ENCODE measurements at regions of chr1 and their contacts with region 1.

Region 1: GRCh38 chr1:206663832-206664652 is 20.7 kb upstream of the MAPKAPK2 start:
- DNase-seq: no peak
- ATAC-seq: peak; percentile 94
- H3K4me3 ChIP-seq: peak overlapping the region; percentile 44; the same call in 1 of the 2 replicates
- H3K27ac ChIP-seq: no peak overlapping the region
- H3K4me1 ChIP-seq: peaks cover 10% of the 10 kb centered on the region
- H3K27me3 ChIP-seq: no peaks in the 10 kb centered on the region
- CTCF ChIP-seq: peak; percentile 81 to 85 (median 84)
- EP300 ChIP-seq: no peak
- POLR2A ChIP-seq: no peak
- RAD21 ChIP-seq: peak; percentile 89

Region 2: GRCh38 chr1:206479183-206480125 is 184.6 kb before region 1 on chr1:
- CTCF ChIA-PET with region 1: interaction called, 31 read pairs
- POLR2A ChIA-PET with region 1: no interaction called
- RAD21 ChIA-PET with region 1: interaction called, 6 read pairs
- SMC1A ChIA-PET with region 1: interaction called, 13 read pairs
- in situ Hi-C with region 1: no loop called
- intact Hi-C with region 1: no loop called
- DNase-seq: no peak
- ATAC-seq: peak; percentile 77
- H3K4me3 ChIP-seq: no peak overlapping the region
- H3K27ac ChIP-seq: no peak overlapping the region
- H3K4me1 ChIP-seq: peaks cover 17% of the 10 kb centered on the region
- H3K27me3 ChIP-seq: no peaks in the 10 kb centered on the region
- CTCF ChIP-seq: peak; percentile 77 to 87 (median 84)
- EP300 ChIP-seq: no peak
- POLR2A ChIP-seq: no peak
- RAD21 ChIP-seq: peak; percentile 80

Region 3: GRCh38 chr1:206556750-206557635 is 107.0 kb before region 1 on chr1:
- CTCF ChIA-PET with region 1: interaction called, 12 read pairs
- POLR2A ChIA-PET with region 1: interaction called, 4 read pairs
- RAD21 ChIA-PET with region 1: interaction called, 5 read pairs
- SMC1A ChIA-PET with region 1: interaction called, 5 read pairs
- in situ Hi-C with region 1: no loop called
- intact Hi-C with region 1: no loop called
- DNase-seq: no peak
- ATAC-seq: peak; percentile 76
- H3K4me3 ChIP-seq: peak overlapping the region; percentile 95
- H3K27ac ChIP-seq: peak overlapping the region; percentile 98
- H3K4me1 ChIP-seq: peaks cover 42% of the 10 kb centered on the region
- H3K27me3 ChIP-seq: no peaks in the 10 kb centered on the region
- CTCF ChIP-seq: no peak
- EP300 ChIP-seq: peak in 1 of 2 experiments; percentile 51; a peak in 2 of 4 replicates
- POLR2A ChIP-seq: peak; percentile 90
- RAD21 ChIP-seq: no peak

Region 4: DNA sequence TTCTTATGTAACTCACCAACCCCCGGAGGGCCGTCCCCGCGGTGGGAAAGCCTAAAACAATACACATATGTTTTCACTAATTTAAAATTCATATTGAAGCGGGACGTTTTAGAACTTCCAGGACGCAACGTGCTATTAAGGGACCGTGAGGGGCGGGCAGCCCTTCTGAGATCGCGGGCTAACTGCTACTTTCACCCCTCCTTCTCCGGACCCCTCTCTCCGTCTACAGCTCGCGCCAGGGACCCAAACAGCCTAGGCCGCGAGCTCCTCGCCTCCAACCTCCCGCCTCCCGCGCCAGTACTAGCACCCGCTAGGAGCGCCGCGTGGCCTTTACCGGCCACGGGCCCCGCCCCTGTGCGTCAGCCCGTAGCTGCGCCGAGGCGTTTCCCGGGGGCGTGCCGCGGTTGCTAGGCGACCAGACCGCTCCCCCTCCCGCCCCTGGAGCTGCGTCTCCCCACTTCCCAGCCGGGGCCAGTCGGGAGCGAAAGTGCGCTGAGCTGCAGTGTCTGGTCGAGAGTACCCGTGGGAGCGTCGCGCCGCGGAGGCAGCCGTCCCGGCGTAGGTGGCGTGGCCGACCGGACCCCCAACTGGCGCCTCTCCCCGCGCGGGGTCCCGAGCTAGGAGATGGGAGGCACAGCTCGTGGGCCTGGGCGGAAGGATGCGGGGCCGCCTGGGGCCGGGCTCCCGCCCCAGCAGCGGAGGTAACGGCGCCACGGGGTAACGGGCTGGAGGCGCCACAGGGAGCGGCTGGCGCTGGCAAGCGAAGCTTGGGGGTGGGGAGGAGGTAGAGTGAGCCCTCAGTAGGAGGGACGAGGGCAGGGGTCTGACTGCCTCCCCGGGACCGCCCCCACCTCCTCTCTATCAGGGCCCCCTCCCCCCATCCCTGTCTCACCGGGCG is 28.7 kb before region 1 on chr1 and contains the start of gene DYRK3:
- CTCF ChIA-PET with region 1: interaction called, 1,150 read pairs
- POLR2A ChIA-PET with region 1: interaction called, 92 read pairs
- RAD21 ChIA-PET with region 1: interaction called, 207 read pairs
- SMC1A ChIA-PET with region 1: interaction called, 301 read pairs
- in situ Hi-C with region 1: no loop called
- intact Hi-C with region 1: loop called (anchors 1 kb)
- DNase-seq: peak; percentile 71
- ATAC-seq: peak; percentile 92
- H3K4me3 ChIP-seq: peak within 1 kb of the TSS; percentile 94
- H3K27ac ChIP-seq: peak within 1 kb of the TSS; percentile 62
- H3K4me1 ChIP-seq: peaks cover 26% of the 10 kb centered on the region
- H3K27me3 ChIP-seq: no peaks in the 10 kb centered on the region
- CTCF ChIP-seq: 0 out of 6 replicates have a peak, but pooled peaks of 1 of the 3 experiments have one; percentile 5
- EP300 ChIP-seq: 0 out of 4 replicates have a peak, but pooled peaks of 1 of the 2 experiments have one; percentile 17
- POLR2A ChIP-seq: peak; percentile 94
- RAD21 ChIP-seq: no peak
- polyA plus RNA-seq, gene DYRK3: 1.6 to 2.8 TPM

Region 5: GRCh38 chr1:206693029-206693428 is 29.0 kb after region 1 on chr1:
- CTCF ChIA-PET with region 1: interaction called, 24 read pairs
- POLR2A ChIA-PET with region 1: interaction called, 5 read pairs
- RAD21 ChIA-PET with region 1: interaction called, 14 read pairs
- SMC1A ChIA-PET with region 1: interaction called, 27 read pairs
- in situ Hi-C with region 1: no loop called
- intact Hi-C with region 1: no loop called
- DNase-seq: no peak
- ATAC-seq: no peak; the same call in 2 of the 3 replicates
- H3K4me3 ChIP-seq: no peak overlapping the region
- H3K27ac ChIP-seq: no peak overlapping the region
- H3K4me1 ChIP-seq: peaks cover 22% of the 10 kb centered on the region
- H3K27me3 ChIP-seq: no peaks in the 10 kb centered on the region
- CTCF ChIP-seq: no peak
- EP300 ChIP-seq: no peak
- POLR2A ChIP-seq: no peak
- RAD21 ChIP-seq: no peak

Region 6: GRCh38 chr1:206734499-206735142 is 70.6 kb after region 1 on chr1:
- CTCF ChIA-PET with region 1: interaction called, 21 read pairs
- POLR2A ChIA-PET with region 1: no interaction called
- RAD21 ChIA-PET with region 1: interaction called, 9 read pairs
- SMC1A ChIA-PET with region 1: interaction called, 15 read pairs
- in situ Hi-C with region 1: no loop called
- intact Hi-C with region 1: no loop called
- DNase-seq: no peak
- ATAC-seq: peak; percentile 45
- H3K4me3 ChIP-seq: no peak overlapping the region
- H3K27ac ChIP-seq: no peak overlapping the region; the same call in 1 of the 2 replicates
- H3K4me1 ChIP-seq: peaks cover 28% of the 10 kb centered on the region
- H3K27me3 ChIP-seq: no peaks in the 10 kb centered on the region
- CTCF ChIP-seq: peak; percentile 84 to 98 (median 96)
- EP300 ChIP-seq: no peak
- POLR2A ChIP-seq: no peak; the same call in 1 of the 2 replicates
- RAD21 ChIP-seq: peak; percentile 98

Region 7: GRCh38 chr1:206878456-206878855 is 214.4 kb after region 1 on chr1:
- CTCF ChIA-PET with region 1: no interaction called
- POLR2A ChIA-PET with region 1: no interaction called
- RAD21 ChIA-PET with region 1: no interaction called
- SMC1A ChIA-PET with region 1: no interaction called
- in situ Hi-C with region 1: no loop called
- intact Hi-C with region 1: no loop called
- DNase-seq: no peak
- ATAC-seq: no peak
- H3K4me3 ChIP-seq: no peak overlapping the region
- H3K27ac ChIP-seq: no peak overlapping the region
- H3K4me1 ChIP-seq: no peaks in the 10 kb centered on the region
- H3K27me3 ChIP-seq: no peaks in the 10 kb centered on the region
- CTCF ChIP-seq: peak in 2 of 3 experiments; percentile 6 to 7; a peak in 1 of 6 replicates
- EP300 ChIP-seq: no peak
- POLR2A ChIP-seq: no peak
- RAD21 ChIP-seq: no peak